Activated T-helper 1 cell treated with anti-CD3 and anti-CD28 coated beads, Interleukin-12 subunit alpha, Interleukin-12 subunit beta, Interleukin-2, Interleukin-4 antibody, amounts not matched to agents 30 ng/mL and 10 ng/mL and 1 ng/mL, durations not matched to agents 14 hours and 24 hours and 36 hours (primary cell): ENCODE measurements at regions of chr5 and their contacts with region 1.

Region 1: DNA sequence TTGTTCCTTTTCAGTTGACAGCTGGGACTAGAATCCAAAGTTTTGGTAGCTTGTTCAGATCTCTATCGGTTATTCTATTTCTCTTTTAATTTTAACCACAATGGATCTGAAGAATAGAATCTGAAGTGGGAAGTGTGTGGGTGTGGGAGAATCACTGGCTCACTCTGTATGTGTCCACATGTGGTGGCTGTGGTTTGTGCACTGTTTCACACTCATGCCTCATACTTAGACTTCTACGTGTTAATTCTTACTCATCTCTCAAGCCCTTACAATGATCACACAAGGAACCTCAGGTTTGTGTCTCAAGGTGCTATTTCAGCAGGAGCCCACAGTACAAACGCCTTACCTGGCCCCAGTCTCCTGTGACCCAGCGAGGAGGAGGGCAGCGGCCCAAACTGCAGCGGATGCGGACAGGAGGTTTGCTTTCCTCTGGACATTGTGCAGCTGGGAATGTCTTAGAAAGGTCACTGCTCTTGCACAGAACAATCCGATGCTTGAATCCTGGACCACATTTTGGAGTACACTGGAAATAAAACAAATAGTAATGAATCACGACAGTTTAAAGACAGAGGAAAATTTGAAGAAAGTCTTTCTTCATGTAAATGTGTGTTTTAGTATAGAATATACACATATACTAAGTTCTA is 309.1 kb downstream of the ADAMTS6 start:
- DNase-seq: no peak
- H3K4me3 Mint-ChIP-seq: no peak overlapping the region
- H3K27ac Mint-ChIP-seq: no peak overlapping the region
- H3K4me1 Mint-ChIP-seq: peaks cover 6% of the 10 kb centered on the region
- H3K27me3 Mint-ChIP-seq: peaks cover 9% of the 10 kb centered on the region

Region 2: DNA sequence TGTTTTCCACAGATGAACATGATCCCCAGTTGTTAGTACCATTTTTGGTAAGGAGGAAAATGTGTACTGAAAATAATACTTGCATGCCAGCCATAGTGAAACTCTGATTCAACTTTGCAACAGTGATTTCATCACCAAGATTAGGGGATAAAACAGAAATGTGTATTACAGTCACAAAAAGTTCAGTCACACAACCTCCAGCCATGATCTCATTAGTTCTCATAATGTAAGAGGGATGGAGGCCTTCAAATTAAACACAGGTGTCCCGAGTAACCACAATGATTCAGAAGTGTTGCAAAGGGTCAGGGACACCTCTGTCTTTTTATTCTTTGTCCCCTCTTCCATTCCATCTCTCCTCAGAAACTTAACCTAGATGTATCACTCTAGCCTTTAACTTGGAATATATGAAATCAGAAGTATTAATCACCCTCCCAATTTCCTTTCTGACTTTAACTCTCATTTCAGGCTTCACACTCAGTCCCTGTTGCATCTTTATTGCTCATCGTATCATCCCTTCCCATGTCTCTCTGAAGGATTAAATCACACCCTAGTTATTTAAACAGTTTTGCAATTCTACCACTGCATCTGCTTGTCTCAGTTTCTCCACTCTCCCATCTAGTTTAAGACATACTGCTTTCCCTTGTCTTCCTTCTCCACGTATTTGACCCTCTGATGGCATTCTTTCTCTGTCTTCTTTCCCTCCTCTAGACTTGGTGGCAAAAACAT is 17.9 kb after region 1 on chr5:
- intact Hi-C with region 1: loop called (anchors 1 kb)
- DNase-seq: no peak
- H3K4me3 Mint-ChIP-seq: no peak overlapping the region
- H3K27ac Mint-ChIP-seq: peak overlapping the region; percentile 30
- H3K4me1 Mint-ChIP-seq: no peaks in the 10 kb centered on the region
- H3K27me3 Mint-ChIP-seq: peaks cover 4% of the 10 kb centered on the region